ENCODE measurements at regions of chr5 and their contacts with region 1.

Region 1: DNA sequence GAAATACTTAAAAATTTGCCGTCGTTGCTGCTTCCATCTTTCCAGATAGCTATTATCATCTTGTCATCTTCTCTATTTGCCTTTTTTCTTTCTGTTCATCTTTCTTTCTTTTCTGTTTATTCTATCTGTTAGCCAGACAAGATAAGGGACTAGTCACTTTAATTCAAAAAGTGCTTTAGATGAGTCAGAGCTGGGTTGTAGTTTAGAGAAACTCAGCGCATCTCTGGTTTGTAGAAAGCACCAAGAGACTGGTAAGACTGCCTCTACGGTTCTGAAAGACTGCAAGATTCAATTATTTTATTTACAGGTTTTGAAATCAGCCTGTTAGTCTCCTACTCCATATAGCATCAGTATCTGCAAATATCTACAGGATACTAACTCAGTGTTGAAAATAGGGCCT is 562.8 kb upstream of the RIOK2 start:
- DNase-seq: no peak
- H3K4me3 Mint-ChIP-seq: no peak overlapping the region
- H3K27ac Mint-ChIP-seq: no peak overlapping the region
- H3K4me1 Mint-ChIP-seq: no peaks in the 10 kb centered on the region
- H3K27me3 Mint-ChIP-seq: no peaks in the 10 kb centered on the region

Region 2: GRCh38 chr5:97797994-97798451 is 52.2 kb after region 1 on chr5:
- intact Hi-C with region 1: loop called (anchors 2 kb)
- DNase-seq: no peak
- H3K4me3 Mint-ChIP-seq: no peak overlapping the region
- H3K27ac Mint-ChIP-seq: no peak overlapping the region
- H3K4me1 Mint-ChIP-seq: no peaks in the 10 kb centered on the region
- H3K27me3 Mint-ChIP-seq: no peaks in the 10 kb centered on the region

Measured in activated T-helper 2 cell treated with anti-CD3 and anti-CD28 coated beads, Interferon-gamma antibody, Interleukin-2, Interleukin-4, amounts not matched to agents 10 μg/mL and 5 μg/mL and 100 μg/mL, durations not matched to agents 14 hours and 24 hours and 36 hours (primary cell).